ENCODE measurements at regions of chr2 and their contacts with region 1.

Region 1: GRCh38 chr2:43219383-43220228 is 6.8 kb downstream of the ZFP36L2 start:
- DNase-seq: peak; percentile 90
- H3K4me3 ChIP-seq: peak overlapping the region; percentile 97
- H3K27ac ChIP-seq: peak overlapping the region; percentile 93
- H3K4me1 ChIP-seq: peaks cover 37% of the 10 kb centered on the region
- H3K27me3 ChIP-seq: no peaks in the 10 kb centered on the region

Region 2: GRCh38 chr2:43142921-43143438 is 76.6 kb before region 1 on chr2:
- in situ Hi-C with region 1: loop called (anchors 10 kb)
- DNase-seq: peak; percentile 28
- H3K4me3 ChIP-seq: no peak overlapping the region
- H3K27ac ChIP-seq: no peak overlapping the region
- H3K4me1 ChIP-seq: no peaks in the 10 kb centered on the region
- H3K27me3 ChIP-seq: no peaks in the 10 kb centered on the region